Mammary epithelial cell (primary cell): ENCODE measurements at regions of chr7 and their contacts with region 1.

Region 1: DNA sequence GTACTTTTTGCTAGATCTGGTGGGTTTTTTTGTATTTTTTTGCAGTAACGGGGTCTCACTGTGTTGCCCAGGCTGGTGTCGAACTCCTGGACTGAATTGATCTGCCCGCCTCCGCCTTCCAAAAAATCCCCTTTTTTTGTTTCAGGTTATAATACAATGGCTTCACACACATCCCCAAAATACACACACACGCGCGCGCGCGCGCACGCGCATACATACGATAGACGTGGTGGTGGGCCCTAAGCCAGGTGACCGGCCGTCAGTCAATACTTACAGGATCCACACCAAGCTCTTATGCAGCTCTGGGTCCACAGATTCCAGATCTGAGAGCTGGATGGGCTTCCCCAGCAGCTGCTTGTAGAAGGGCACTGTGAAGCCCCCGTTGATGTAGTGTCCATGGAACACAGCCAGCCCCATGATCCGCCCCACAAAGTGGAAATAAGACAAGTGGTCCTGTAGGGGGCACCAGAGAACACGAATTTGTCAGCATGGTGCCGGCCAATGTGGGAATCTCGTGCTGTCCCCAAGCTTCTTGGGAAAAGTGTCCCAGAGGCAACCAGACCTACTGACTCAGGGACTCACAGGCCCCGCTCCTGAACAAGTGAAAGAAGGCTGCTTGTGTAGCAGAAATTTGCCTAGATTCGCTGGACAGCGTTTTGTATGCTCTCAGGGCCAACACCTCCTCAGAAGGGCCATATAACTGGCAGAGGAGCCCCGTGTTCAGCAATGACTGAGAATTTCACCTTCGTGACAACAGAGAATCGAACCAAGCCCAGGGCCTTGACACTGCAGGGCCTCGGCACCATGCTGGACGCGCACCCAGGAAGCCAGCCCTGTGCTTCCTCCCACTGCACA is 103.6 kb downstream of the SMURF1 start:
- DNase-seq: peak; percentile 65
- H3K4me3 ChIP-seq: no peak overlapping the region
- H3K27ac ChIP-seq: no peak overlapping the region
- H3K4me1 ChIP-seq: no peaks in the 10 kb centered on the region
- H3K27me3 ChIP-seq: no peaks in the 10 kb centered on the region
- CTCF ChIP-seq: peak; percentile 51 to 65

Region 2: DNA sequence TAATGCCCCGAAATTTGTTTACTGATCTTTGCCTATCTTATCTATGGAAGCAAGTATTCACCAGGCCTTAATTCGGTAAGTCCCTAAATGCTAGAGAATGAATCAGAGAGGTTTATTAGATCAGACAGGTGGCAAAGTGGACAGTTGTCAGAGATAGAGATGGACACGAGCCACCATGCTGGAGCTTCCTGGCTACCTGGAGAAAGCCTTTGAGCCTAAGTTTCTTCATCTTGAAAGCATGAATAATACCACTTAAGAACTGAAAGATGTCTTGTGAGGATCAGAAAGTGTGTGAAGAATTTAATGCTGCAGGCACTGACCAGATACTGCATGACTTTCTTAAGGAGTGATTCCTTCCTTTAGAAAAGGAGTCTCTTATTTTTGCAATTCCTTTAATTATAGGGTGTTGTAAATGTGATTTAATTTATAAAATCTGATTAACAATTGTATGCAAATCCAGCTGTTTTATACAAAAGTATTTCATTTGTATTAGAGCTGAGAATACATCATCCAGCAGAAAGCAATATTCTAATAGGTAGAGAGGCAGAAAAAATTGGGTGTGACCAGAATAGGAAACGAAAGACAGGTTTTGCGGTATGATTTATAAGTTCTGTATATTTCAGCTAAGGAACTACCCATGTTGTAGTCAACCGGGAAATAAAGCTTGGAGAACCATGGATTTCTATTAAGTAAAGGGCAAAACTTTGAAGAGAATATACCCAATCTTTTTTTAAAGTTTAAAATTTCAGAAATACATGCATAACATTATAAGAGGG is 20.9 kb after region 1 on chr7:
- CTCF ChIA-PET with region 1: no interaction called
- dilution Hi-C with region 1: no loop called
- in situ Hi-C with region 1: no loop called
- intact Hi-C with region 1: no loop called
- DNase-seq: no peak
- H3K4me3 ChIP-seq: no peak overlapping the region
- H3K27ac ChIP-seq: no peak overlapping the region
- H3K4me1 ChIP-seq: no peaks in the 10 kb centered on the region
- H3K27me3 ChIP-seq: no peaks in the 10 kb centered on the region
- CTCF ChIP-seq: no peak

Region 3: DNA sequence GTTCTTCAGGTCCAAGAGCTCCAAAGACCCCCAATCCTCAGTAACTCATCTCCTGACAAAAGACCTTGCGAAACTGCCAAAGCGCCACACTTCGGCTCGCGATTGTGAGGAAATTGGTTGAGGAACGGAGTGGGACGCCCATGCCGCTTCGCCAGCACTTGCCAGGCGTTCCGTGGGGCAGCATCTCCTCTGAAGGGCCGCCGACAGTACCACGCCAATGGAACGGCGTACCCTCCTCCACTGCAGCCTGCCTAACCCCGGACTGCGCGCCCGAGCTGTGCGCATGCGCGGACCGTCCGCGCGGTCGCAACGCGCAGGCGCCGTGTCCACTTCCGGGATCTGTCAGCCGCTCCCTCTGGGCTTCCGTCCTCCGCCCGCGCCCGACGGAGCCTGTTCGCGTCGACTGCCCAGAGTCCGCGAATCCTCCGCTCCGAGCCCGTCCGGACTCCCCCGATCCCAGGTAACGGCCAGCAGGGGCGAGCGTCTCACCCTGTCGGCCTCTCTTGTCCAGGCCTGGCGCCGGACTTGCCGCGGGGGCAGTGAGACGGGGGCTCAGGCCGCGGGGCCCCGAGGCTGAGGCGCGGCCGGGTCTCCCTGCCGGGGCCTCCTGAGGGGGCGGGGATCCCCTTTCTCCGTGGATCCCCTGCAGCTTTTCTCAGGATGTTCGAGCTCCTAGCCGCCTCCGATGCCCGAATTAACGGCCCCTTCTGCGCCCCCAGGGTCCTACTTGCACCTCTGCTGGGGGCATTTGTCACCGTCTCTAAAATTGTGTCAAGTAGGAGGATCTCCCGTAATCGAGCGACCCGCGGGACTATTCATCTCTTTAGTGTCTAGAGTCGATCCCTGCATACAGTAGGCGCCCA is 285.4 kb after region 1 on chr7 and contains the start of gene ARPC1A:
- CTCF ChIA-PET with region 1: no interaction called
- dilution Hi-C with region 1: no loop called
- in situ Hi-C with region 1: loop called in 1 of 2 experiments (anchors 5 kb)
- intact Hi-C with region 1: no loop called
- DNase-seq: peak; percentile 92
- H3K4me3 ChIP-seq: peak within 1 kb of the TSS; percentile 66 to 85 (median 76)
- H3K27ac ChIP-seq: peak within 1 kb of the TSS; percentile 79
- H3K4me1 ChIP-seq: peaks cover 33% of the 10 kb centered on the region
- H3K27me3 ChIP-seq: no peaks in the 10 kb centered on the region
- CTCF ChIP-seq: peak in 1 of 2 donors; percentile 35
- total RNA-seq, gene ARPC1A: 177 to 218 TPM